CD4-positive, alpha-beta T cell (primary cell): ENCODE measurements at regions of chr11 and their contacts with region 1.

Region 1: DNA sequence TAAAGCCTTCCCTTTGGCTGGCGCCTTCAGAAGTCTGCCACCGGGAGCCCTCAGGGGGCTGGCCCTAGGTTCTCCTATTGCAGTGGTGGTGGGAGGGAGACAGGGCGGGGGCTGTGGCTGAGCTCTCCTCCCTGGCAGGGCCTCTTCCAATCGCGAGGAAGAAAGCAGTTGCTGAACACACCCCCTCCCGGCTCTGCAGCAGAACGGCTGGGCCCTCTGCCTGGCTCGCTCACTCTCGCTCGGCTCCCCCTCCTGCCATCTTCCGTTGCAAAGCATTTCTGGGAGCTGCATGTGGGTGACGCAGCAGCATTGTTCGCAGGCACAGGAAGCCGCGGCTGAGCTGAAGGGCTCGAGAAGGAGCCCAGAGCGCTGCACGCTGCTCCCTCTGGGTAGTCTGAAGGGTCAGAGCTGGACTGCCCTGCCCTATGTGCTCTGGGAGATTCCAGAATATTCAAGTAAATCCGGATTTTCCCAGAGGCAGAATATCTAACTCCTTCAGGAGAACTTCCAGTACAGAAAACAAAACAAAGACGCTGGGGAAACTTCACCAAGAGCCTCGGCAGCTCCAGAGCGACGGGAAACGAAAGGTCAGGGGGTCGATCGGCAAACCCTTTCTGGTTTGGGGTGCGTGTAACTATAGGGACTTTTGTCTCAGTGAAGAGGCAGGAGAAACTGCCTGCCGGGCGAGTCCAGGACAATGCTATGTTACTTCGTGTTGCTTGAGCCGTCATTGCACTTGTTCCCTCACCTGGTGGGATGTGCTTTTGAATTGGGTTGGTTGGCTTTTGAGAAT is 26.3 kb upstream of the GRK2 start:
- DNase-seq: peak; percentile 91 to 99 (median 95)
- ATAC-seq: peak; percentile 88
- H3K4me3 ChIP-seq: peak overlapping the region; percentile 97
- H3K4me3 Mint-ChIP-seq: peak overlapping the region; percentile 100
- H3K27ac ChIP-seq: peak overlapping the region; percentile 97 to 98
- H3K27ac Mint-ChIP-seq: peak overlapping the region; percentile 98
- H3K4me1 ChIP-seq: peaks cover 46% of the 10 kb centered on the region
- H3K4me1 Mint-ChIP-seq: peaks cover 61% of the 10 kb centered on the region
- H3K27me3 ChIP-seq: no peaks in the 10 kb centered on the region
- H3K27me3 Mint-ChIP-seq: no peaks in the 10 kb centered on the region
- CTCF ChIP-seq: no peak

Region 2: DNA sequence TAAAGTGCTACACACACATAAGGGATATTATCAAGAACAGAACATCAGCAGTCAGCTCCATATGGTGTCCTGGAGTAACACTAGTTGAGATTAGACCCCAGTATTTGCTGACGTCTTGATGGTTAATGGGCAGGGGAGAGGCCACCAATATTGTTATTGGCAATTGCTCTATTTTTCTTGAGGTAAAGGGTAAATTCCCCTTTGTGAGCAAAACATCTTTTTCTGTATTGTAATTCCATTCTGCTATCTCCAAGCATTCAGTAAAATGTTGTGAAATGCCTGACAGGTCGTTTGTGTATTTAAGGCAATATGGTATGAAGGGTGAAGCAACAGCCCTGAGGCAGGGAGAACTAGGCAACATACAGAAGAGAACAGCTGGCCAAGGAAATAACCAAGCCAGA is 303.7 kb before region 1 on chr11:
- CTCF ChIA-PET with region 1: no interaction called
- POLR2A ChIA-PET with region 1: no interaction called
- intact Hi-C with region 1: no loop called
- DNase-seq: no peak
- ATAC-seq: no peak
- H3K4me3 ChIP-seq: no peak overlapping the region
- H3K4me3 Mint-ChIP-seq: no peak overlapping the region
- H3K27ac ChIP-seq: no peak overlapping the region
- H3K27ac Mint-ChIP-seq: no peak overlapping the region
- H3K4me1 ChIP-seq: no peaks in the 10 kb centered on the region
- H3K4me1 Mint-ChIP-seq: no peaks in the 10 kb centered on the region
- H3K27me3 ChIP-seq: no peaks in the 10 kb centered on the region
- H3K27me3 Mint-ChIP-seq: no peaks in the 10 kb centered on the region
- CTCF ChIP-seq: no peak

Region 3: DNA sequence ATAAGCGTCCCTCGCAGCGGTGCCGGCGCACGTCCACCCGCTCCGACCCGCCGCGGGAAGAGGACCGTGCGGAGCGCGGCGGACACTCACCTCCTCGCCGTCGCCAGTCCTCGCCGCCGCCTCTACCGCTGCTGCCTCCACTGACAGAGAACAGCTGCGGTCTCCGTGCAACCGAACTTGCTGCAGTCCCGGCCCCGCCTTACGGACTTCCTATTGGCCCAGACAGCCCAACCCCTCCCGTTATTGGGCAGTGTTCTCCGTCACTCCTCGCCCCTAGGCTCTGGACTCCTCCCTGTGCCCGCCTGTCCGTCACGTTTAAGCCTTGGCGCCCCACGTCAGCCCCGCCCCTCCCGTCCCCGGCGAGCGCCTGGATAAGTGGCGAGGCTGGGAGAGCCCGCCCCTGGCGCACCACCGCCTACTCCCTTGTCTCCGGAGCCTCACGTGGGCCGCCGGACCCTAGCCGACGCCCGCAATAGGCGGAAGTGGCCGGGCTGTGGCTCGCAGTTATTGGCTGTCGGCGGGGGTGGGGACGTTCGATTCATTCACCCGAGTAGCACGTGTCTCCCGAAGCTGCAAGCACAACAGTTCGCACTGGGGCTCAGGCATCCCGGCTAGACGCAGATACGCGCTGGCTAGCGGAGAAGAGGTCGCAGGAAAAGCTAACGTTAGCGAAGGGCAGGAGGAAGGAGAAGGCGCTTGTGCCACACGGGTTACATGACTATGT is 281.6 kb before region 1 on chr11 and contains the start of gene PC:
- CTCF ChIA-PET with region 1: no interaction called
- POLR2A ChIA-PET with region 1: interaction called, 4 read pairs
- intact Hi-C with region 1: loop called in 1 of 2 experiments (anchors 5 kb)
- DNase-seq: peak; percentile 91 to 99 (median 96)
- ATAC-seq: peak; percentile 96
- H3K4me3 ChIP-seq: peak within 1 kb of the TSS; percentile 57
- H3K4me3 Mint-ChIP-seq: peak within 1 kb of the TSS; percentile 91
- H3K27ac ChIP-seq: peak within 1 kb of the TSS; percentile 33 to 41
- H3K27ac Mint-ChIP-seq: peak within 1 kb of the TSS; percentile 71
- H3K4me1 ChIP-seq: peaks cover 20% of the 10 kb centered on the region
- H3K4me1 Mint-ChIP-seq: peaks cover 21% of the 10 kb centered on the region
- H3K27me3 ChIP-seq: no peaks in the 10 kb centered on the region
- H3K27me3 Mint-ChIP-seq: no peaks in the 10 kb centered on the region
- CTCF ChIP-seq: no peak
- total RNA-seq, gene PC: 5.1 to 7.1 TPM

Region 4: DNA sequence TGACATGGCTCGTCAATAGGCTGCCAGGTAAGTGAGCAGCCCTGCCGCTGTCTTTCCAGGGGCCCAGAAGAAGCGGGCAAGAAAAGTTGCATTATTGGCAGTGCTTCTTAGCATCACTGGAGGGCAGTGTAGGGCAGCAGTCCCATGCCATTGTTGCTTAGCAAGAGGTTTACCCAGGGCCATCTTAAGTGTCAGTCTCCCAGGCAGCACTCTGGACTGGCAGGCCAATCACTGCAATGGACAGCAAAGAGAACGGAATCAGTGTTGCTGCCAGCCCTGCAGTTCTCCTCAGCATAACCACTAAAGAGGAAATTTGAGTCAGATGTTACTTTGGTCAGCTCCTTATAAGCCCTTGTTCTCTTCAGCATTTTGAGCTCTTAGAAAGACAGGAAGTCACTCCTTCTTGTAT is 12.9 kb after region 1 on chr11:
- CTCF ChIA-PET with region 1: interaction called, 7 read pairs
- POLR2A ChIA-PET with region 1: interaction called, 56 read pairs
- intact Hi-C with region 1: no loop called
- DNase-seq: peak in 5 of 14 experiments; percentile 26 to 74 (median 53)
- ATAC-seq: peak; percentile 67
- H3K4me3 ChIP-seq: no peak overlapping the region
- H3K4me3 Mint-ChIP-seq: no peak overlapping the region
- H3K27ac ChIP-seq: no peak overlapping the region
- H3K27ac Mint-ChIP-seq: peak overlapping the region; percentile 57
- H3K4me1 ChIP-seq: peaks cover 27% of the 10 kb centered on the region
- H3K4me1 Mint-ChIP-seq: peaks cover 54% of the 10 kb centered on the region
- H3K27me3 ChIP-seq: no peaks in the 10 kb centered on the region
- H3K27me3 Mint-ChIP-seq: no peaks in the 10 kb centered on the region
- CTCF ChIP-seq: peak; percentile 34

Region 5: GRCh38 chr11:67277231-67277961 is 37.4 kb after region 1 on chr11:
- CTCF ChIA-PET with region 1: no interaction called
- POLR2A ChIA-PET with region 1: interaction called, 28 read pairs
- intact Hi-C with region 1: no loop called
- DNase-seq: peak; percentile 81 to 98 (median 93)
- ATAC-seq: peak; percentile 93
- H3K4me3 ChIP-seq: peak overlapping the region; percentile 43
- H3K4me3 Mint-ChIP-seq: peak overlapping the region; percentile 91
- H3K27ac ChIP-seq: peak overlapping the region; percentile 76 to 97
- H3K27ac Mint-ChIP-seq: peak overlapping the region; percentile 90
- H3K4me1 ChIP-seq: peaks cover 100% of the 10 kb centered on the region
- H3K4me1 Mint-ChIP-seq: peaks cover 64% of the 10 kb centered on the region
- H3K27me3 ChIP-seq: no peaks in the 10 kb centered on the region
- H3K27me3 Mint-ChIP-seq: no peaks in the 10 kb centered on the region
- CTCF ChIP-seq: no peak

Region 6: DNA sequence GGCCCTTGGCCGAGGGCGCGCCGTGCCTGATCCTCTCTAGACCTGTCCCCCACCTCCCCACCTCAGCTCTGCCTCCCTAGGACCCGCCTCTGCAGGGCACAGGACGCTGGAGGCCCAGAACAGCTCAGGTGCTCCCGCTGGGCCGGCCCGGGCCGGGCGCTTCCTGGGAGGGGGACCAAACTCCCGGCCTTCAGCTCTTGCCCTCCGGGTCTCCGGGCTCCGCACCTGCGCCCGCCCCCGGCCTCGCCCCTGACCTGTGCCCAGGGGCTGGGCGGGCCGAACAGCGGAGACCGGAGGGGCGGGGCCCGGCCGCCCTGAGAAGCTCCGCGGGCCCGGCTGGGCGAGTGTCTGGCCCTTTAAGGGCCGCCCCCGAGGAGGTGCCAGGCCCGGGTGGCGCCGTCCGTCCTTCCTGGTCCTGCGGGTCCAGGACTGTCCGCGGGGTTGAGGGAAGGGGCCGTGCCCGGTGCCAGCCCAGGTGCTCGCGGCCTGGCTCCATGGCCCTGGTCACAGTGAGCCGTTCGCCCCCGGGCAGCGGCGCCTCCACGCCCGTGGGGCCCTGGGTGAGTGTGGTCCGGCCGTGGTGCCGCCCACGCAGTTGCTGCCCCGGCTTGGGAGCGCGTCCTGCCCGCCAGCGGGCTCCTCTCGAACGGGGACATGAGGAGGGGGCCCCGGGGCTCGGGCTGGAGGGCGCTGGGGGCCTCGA is 63.3 kb after region 1 on chr11 and contains the start of gene SSH3:
- CTCF ChIA-PET with region 1: no interaction called
- POLR2A ChIA-PET with region 1: interaction called, 13 read pairs
- intact Hi-C with region 1: loop called in 1 of 2 experiments (anchors 10 kb)
- DNase-seq: peak in 8 of 14 experiments; percentile 30 to 66 (median 48)
- ATAC-seq: peak; percentile 62
- H3K4me3 ChIP-seq: peak within 1 kb of the TSS; percentile 62
- H3K4me3 Mint-ChIP-seq: peak within 1 kb of the TSS; percentile 65
- H3K27ac ChIP-seq: peak within 1 kb of the TSS in 1 of 2 donors; percentile 41
- H3K27ac Mint-ChIP-seq: no peak within 1 kb of the TSS
- H3K4me1 ChIP-seq: peaks cover 33% of the 10 kb centered on the region
- H3K4me1 Mint-ChIP-seq: peaks cover 5% of the 10 kb centered on the region
- H3K27me3 ChIP-seq: no peaks in the 10 kb centered on the region
- H3K27me3 Mint-ChIP-seq: no peaks in the 10 kb centered on the region
- CTCF ChIP-seq: no peak
- total RNA-seq, gene SSH3: 8.5 to 8.8 TPM

Region 7: DNA sequence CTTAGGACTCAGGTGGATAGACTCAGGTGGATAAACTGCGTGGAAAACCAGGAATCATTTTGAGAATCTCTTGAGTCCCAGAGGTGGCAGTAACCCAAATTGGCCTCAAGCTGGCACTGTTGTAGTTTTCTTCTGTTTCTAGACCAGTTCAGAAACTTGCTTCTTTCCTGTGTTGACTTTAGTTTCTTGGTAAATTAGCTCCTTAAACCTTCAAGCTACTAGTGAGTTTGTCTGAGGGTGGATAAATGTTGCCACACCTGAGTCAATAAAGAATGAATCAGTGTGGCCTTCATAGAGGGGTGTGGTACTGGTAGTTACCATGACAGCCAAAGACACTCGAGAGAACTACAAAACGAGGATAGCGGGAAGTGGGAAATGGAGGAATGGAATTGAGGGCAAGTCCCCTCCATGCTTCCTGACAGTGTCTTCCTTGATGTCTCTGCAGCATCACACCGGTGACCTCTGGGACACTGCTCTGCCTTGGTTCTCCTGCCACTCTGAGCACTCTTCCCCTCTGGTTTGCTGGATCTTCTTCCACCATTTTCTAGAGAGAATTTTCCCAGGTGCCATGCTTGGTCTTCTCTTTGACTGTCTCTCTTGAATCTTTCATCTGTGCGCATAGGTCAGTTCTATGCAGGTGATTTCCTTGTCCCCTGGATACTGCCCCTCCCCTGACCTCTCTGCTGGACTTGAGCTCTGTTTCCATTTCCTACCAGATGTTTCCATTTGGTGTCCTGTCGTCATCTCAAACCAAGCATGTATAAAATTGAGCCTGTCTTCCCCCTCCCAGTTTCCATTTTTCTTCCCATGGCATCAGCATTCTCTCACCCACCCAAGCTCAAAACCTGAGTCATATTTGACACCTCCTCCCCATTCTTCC is 106.2 kb after region 1 on chr11:
- CTCF ChIA-PET with region 1: interaction called, 5 read pairs
- POLR2A ChIA-PET with region 1: interaction called, 14 read pairs
- intact Hi-C with region 1: no loop called
- DNase-seq: peak in 4 of 14 experiments; percentile 39 to 65 (median 55)
- ATAC-seq: peak; percentile 71
- H3K4me3 ChIP-seq: no peak overlapping the region
- H3K4me3 Mint-ChIP-seq: peak overlapping the region; percentile 57
- H3K27ac ChIP-seq: peak overlapping the region in 1 of 2 donors; percentile 18
- H3K27ac Mint-ChIP-seq: peak overlapping the region; percentile 78
- H3K4me1 ChIP-seq: peaks cover 40% of the 10 kb centered on the region
- H3K4me1 Mint-ChIP-seq: peaks cover 63% of the 10 kb centered on the region
- H3K27me3 ChIP-seq: no peaks in the 10 kb centered on the region
- H3K27me3 Mint-ChIP-seq: no peaks in the 10 kb centered on the region
- CTCF ChIP-seq: peak; percentile 81

Region 8: DNA sequence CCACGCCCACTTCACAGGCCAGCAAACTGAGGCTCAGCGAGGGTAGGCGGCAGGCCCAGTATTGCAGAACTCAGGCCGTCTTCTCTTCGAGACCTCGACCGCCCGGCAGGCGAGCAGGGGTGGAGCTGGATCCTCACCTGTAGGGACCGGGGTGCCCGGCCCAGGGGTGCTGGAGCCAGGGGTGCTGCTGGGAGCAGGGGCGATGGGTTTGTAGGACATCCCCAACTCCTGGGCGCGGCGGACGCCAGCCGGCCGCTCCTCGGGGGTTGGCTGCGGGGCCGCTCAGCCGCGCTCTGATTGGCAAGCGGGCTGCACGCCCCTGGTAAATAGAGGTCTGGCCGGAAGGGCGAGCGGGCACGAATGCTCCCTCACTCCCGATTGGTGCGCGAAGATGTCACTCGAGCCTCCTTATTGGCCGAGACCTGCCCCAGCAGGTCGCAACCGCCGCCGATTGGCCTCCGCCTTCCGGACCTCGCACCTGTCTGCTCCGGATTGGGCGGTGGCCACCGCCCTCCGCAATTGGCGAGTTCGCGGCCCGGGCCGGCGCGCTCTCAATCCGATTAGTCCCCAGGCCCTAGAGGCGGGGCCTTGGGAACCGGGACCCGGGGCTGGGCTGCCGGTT is 268.0 kb after region 1 on chr11 and contains the start of gene CDK2AP2:
- CTCF ChIA-PET with region 1: no interaction called
- POLR2A ChIA-PET with region 1: no interaction called
- intact Hi-C with region 1: loop called (anchors 5 to 10 kb)
- DNase-seq: peak; percentile 91 to 99 (median 97)
- ATAC-seq: peak; percentile 71
- H3K4me3 ChIP-seq: peak within 1 kb of the TSS; percentile 76
- H3K4me3 Mint-ChIP-seq: peak within 1 kb of the TSS; percentile 93
- H3K27ac ChIP-seq: peak within 1 kb of the TSS; percentile 87 to 97
- H3K27ac Mint-ChIP-seq: peak within 1 kb of the TSS; percentile 98
- H3K4me1 ChIP-seq: peaks cover 50% of the 10 kb centered on the region
- H3K4me1 Mint-ChIP-seq: peaks cover 44% of the 10 kb centered on the region
- H3K27me3 ChIP-seq: peaks cover 0 to 9% of the 10 kb centered on the region in 2 experiments
- H3K27me3 Mint-ChIP-seq: no peaks in the 10 kb centered on the region
- CTCF ChIP-seq: no peak
- total RNA-seq, gene CDK2AP2: 19.5 to 22.0 TPM